ENCODE measurements at regions of chr16 and their contacts with region 1.

Region 1: GRCh38 chr16:88633684-88634140 is 4.7 kb upstream of the IL17C start:
- DNase-seq: no peak
- ATAC-seq: no peak
- H3K4me3 ChIP-seq: peak overlapping the region in 4 of 5 experiments; percentile 62 to 78 (median 68)
- H3K4me3 Mint-ChIP-seq: peak overlapping the region; percentile 85
- H3K27ac ChIP-seq: peak overlapping the region; percentile 81 to 87
- H3K27ac Mint-ChIP-seq: peak overlapping the region; percentile 92
- H3K4me1 ChIP-seq: peaks cover 37 to 56% of the 10 kb centered on the region in 2 donors
- H3K4me1 Mint-ChIP-seq: peaks cover 45% of the 10 kb centered on the region
- H3K27me3 ChIP-seq: peaks cover 0 to 6% (median 0%) of the 10 kb centered on the region in 4 experiments
- H3K27me3 Mint-ChIP-seq: no peaks in the 10 kb centered on the region
- CTCF ChIP-seq: no peak

Region 2: GRCh38 chr16:88510091-88510994 is 123.4 kb before region 1 on chr16:
- CTCF ChIA-PET with region 1: no interaction called
- POLR2A ChIA-PET with region 1: no interaction called
- intact Hi-C with region 1: no loop called
- DNase-seq: no peak
- ATAC-seq: no peak
- H3K4me3 ChIP-seq: no peak overlapping the region
- H3K4me3 Mint-ChIP-seq: no peak overlapping the region
- H3K27ac ChIP-seq: no peak overlapping the region
- H3K27ac Mint-ChIP-seq: no peak overlapping the region
- H3K4me1 ChIP-seq: no peaks in the 10 kb centered on the region
- H3K4me1 Mint-ChIP-seq: no peaks in the 10 kb centered on the region
- H3K27me3 ChIP-seq: no peaks in the 10 kb centered on the region
- H3K27me3 Mint-ChIP-seq: no peaks in the 10 kb centered on the region
- CTCF ChIP-seq: no peak

Region 3: DNA sequence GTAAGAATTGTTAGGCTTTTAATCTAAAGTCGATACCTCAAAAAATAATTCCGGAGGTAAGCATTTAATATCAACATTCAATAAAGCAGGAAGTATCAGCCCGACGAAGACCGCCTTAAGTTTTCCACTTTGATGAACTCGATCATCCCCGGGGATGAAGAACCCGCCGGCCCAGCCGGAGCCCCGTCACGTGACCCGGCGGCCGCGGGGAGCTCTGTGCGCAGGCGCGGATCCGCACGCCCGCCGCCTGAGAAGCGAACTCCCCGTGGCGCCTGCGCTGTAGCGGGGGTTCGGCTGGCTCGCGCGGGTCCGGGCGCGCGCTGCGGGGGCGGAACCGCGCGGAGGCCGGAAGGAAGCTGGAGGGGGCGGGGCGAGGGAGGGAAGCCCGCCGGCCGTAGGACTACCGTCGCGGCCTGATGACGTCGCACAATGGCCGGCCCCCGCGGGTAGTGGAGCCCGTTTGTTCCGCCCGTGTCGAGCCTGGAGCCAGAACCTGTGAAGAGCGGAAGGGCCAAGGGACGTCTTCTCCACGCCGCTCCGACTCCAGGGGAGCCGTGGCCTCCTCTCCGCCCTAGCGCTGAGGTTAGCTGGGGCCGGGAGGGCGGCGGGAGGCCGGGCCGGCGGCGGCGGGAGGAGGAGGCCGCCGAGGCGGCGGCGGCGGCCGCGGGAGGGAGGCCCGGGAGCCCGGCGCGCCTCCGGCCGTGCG is 63.6 kb before region 1 on chr16 and contains the start of gene ZC3H18:
- CTCF ChIA-PET with region 1: interaction called, 9 read pairs
- POLR2A ChIA-PET with region 1: no interaction called
- intact Hi-C with region 1: loop called (anchors 2 kb)
- DNase-seq: peak; percentile 99
- ATAC-seq: peak; percentile 93
- H3K4me3 ChIP-seq: peak within 1 kb of the TSS; percentile 55 to 76 (median 73)
- H3K4me3 Mint-ChIP-seq: peak within 1 kb of the TSS; percentile 90
- H3K27ac ChIP-seq: peak within 1 kb of the TSS; percentile 52 to 87
- H3K27ac Mint-ChIP-seq: peak within 1 kb of the TSS; percentile 91
- H3K4me1 ChIP-seq: peaks cover 17 to 18% of the 10 kb centered on the region in 2 donors
- H3K4me1 Mint-ChIP-seq: peaks cover 25% of the 10 kb centered on the region
- H3K27me3 ChIP-seq: no peaks in the 10 kb centered on the region
- H3K27me3 Mint-ChIP-seq: no peaks in the 10 kb centered on the region
- CTCF ChIP-seq: no peak
- total RNA-seq, gene ZC3H18: 74.2 and 84.1 TPM in 2 replicates

Region 4: DNA sequence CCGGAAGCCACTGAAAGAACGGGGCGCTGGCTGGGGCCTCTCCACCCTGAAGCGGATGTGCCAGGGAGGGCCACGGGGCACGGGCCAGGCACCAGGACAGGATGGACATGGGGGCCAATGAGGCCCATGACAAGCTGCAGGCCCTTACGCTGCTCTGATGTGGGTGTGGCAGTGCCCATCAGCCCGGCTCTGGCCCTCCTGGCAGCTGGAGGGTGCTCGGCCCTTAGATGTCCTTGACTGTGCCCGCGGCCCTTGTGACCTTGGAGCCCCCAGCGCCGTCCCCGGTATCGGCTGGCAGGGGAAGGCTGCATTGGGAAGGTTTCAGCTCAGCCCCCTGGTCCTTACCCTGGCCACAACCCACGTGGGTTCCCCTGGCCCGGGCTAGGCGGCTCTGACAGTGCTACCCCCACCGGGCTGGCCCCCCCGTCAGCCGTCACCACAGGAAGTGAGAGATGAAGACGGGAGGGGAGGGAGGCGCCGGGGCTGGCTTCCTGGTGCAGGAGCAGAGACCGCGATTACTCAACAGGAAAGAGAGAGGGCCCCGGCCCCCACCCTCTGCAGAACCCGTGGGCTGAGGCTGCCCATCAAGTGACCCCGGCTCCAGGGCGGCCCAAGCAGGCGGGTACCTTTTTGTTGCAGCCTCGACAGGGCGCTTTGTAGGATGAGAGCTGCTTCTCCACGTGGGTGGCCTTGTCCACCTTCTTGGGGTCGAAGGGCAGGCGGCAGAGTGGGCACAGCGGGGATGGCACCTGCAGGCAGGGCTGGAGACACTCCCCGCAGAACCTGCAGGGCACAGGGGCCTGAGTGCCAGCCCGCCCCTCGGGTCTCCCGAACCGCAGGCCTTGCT is 67.1 kb after region 1 on chr16:
- CTCF ChIA-PET with region 1: interaction called, 8 read pairs
- POLR2A ChIA-PET with region 1: interaction called, 7 read pairs
- intact Hi-C with region 1: loop called (anchors 2 kb)
- DNase-seq: peak; percentile 91
- ATAC-seq: peak; percentile 79
- H3K4me3 ChIP-seq: peak overlapping the region; percentile 32 to 69 (median 54)
- H3K4me3 Mint-ChIP-seq: peak overlapping the region; percentile 84
- H3K27ac ChIP-seq: peak overlapping the region; percentile 84 to 91
- H3K27ac Mint-ChIP-seq: peak overlapping the region; percentile 96
- H3K4me1 ChIP-seq: peaks cover 61 to 83% of the 10 kb centered on the region in 2 donors
- H3K4me1 Mint-ChIP-seq: peaks cover 70% of the 10 kb centered on the region
- H3K27me3 ChIP-seq: no peaks in the 10 kb centered on the region
- H3K27me3 Mint-ChIP-seq: no peaks in the 10 kb centered on the region
- CTCF ChIP-seq: no peak

Measured in B cell (primary cell).